ENCODE measurements at regions of chr17 and their contacts with region 1.

Region 1: GRCh38 chr17:75515496-75516254 is at the start of gene CASKIN2:
- DNase-seq: peak; percentile 97 to 99
- H3K4me3 ChIP-seq: peak within 1 kb of the TSS; percentile 93
- H3K4me3 Mint-ChIP-seq: peak within 1 kb of the TSS; percentile 94
- H3K27ac Mint-ChIP-seq: no peak within 1 kb of the TSS
- H3K4me1 ChIP-seq: peaks cover 15% of the 10 kb centered on the region; the same call in 1 of the 2 replicates
- H3K4me1 Mint-ChIP-seq: peaks cover 12% of the 10 kb centered on the region
- H3K27me3 ChIP-seq: no peaks in the 10 kb centered on the region
- H3K27me3 Mint-ChIP-seq: no peaks in the 10 kb centered on the region
- CTCF ChIP-seq: peak; percentile 99
- total RNA-seq, gene CASKIN2: 41.8 and 48.9 TPM in 2 replicates

Region 2: DNA sequence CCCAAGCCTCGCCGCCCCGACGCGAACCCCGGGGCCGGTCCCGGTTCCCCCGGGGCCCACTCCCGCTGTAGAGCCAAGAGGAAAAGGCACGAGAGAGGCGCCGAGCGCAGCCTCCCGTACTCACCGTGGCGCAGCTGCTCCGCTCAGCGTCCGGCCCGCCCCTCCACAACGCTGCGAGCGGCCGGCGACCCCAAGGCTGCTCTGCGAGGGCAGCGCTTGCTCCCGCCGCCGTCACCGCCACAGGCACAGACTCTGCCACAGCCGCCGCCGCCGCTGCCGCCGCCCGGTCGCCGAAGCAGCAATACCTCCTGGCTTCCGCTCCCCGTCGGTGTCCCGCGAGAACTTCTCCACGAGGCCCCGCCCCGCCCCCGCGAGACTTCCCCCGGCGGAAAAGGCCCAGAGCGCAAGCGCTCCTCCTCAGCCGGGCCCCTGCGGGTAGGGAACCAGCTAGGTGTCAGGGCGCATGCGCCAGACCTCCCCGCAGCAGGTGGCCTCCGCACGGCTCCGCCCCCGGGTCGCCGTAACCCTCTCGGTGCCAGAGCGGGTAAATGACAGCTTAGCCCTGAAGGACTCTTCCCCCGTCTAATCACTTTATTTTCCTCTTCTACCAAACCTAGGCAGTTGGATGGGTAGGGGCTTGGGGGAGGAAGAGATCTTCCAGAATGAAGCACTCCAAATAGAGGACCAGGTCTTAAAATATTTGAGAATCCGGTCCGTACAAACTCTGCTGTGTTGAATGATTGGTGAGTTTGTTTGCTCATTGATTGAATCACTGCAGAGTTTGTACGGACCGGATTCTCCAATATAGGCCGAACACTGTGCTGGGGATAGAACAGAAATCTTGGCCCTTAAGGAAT is 110.1 kb before region 1 on chr17 and contains the start of gene GRB2:
- CTCF ChIA-PET with region 1: interaction called, 10 read pairs
- POLR2A ChIA-PET with region 1: interaction called, 3 read pairs
- intact Hi-C with region 1: no loop called
- DNase-seq: peak; percentile 99 to 100
- H3K4me3 ChIP-seq: peak within 1 kb of the TSS; percentile 70
- H3K4me3 Mint-ChIP-seq: peak within 1 kb of the TSS; percentile 78
- H3K27ac Mint-ChIP-seq: peak within 1 kb of the TSS; percentile 71
- H3K4me1 ChIP-seq: 0 out of 2 replicates have a peak, but pooled peaks cover 6% of the 10 kb centered on the region
- H3K4me1 Mint-ChIP-seq: peaks cover 12% of the 10 kb centered on the region
- H3K27me3 ChIP-seq: no peaks in the 10 kb centered on the region
- H3K27me3 Mint-ChIP-seq: no peaks in the 10 kb centered on the region
- CTCF ChIP-seq: no peak
- total RNA-seq, gene GRB2: 113 and 115 TPM in 2 replicates

Region 3: GRCh38 chr17:75549221-75550138 is 33.8 kb after region 1 on chr17:
- CTCF ChIA-PET with region 1: interaction called, 10 read pairs
- POLR2A ChIA-PET with region 1: interaction called, 4 read pairs
- intact Hi-C with region 1: loop called (anchors 5 kb)
- DNase-seq: peak; percentile 69 to 78
- H3K4me3 ChIP-seq: no peak overlapping the region
- H3K4me3 Mint-ChIP-seq: no peak overlapping the region
- H3K27ac Mint-ChIP-seq: peak overlapping the region; percentile 68
- H3K4me1 ChIP-seq: peaks cover 48% of the 10 kb centered on the region
- H3K4me1 Mint-ChIP-seq: peaks cover 22% of the 10 kb centered on the region
- H3K27me3 ChIP-seq: no peaks in the 10 kb centered on the region
- H3K27me3 Mint-ChIP-seq: no peaks in the 10 kb centered on the region
- CTCF ChIP-seq: no peak

Region 4: DNA sequence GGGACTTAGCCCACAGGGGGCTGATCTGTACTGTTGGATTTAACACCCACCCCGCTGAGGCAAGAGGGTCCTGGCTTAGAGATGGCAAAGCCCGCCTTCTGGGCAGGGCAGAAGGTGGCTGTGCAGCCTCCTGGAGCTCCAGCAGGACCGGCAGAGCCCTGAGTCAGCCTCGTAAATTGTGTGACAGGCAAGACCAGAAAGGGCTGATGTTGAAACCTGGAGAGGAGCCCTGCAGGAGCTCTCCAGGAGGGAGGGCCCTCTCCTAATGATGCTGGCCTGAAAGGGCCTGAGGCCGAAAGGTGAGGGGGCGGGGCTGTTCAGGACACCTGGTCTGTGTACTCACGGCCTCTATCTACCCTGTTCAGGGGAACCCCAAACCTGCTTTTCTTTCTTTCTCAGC is 49.4 kb after region 1 on chr17:
- CTCF ChIA-PET with region 1: interaction called, 17 read pairs
- POLR2A ChIA-PET with region 1: no interaction called
- intact Hi-C with region 1: no loop called
- DNase-seq: peak; percentile 79
- H3K4me3 ChIP-seq: no peak overlapping the region
- H3K4me3 Mint-ChIP-seq: no peak overlapping the region
- H3K27ac Mint-ChIP-seq: peak overlapping the region; percentile 58
- H3K4me1 ChIP-seq: peaks cover 8% of the 10 kb centered on the region; the same call in 1 of the 2 replicates
- H3K4me1 Mint-ChIP-seq: no peaks in the 10 kb centered on the region
- H3K27me3 ChIP-seq: no peaks in the 10 kb centered on the region
- H3K27me3 Mint-ChIP-seq: no peaks in the 10 kb centered on the region
- CTCF ChIP-seq: no peak

Region 5: DNA sequence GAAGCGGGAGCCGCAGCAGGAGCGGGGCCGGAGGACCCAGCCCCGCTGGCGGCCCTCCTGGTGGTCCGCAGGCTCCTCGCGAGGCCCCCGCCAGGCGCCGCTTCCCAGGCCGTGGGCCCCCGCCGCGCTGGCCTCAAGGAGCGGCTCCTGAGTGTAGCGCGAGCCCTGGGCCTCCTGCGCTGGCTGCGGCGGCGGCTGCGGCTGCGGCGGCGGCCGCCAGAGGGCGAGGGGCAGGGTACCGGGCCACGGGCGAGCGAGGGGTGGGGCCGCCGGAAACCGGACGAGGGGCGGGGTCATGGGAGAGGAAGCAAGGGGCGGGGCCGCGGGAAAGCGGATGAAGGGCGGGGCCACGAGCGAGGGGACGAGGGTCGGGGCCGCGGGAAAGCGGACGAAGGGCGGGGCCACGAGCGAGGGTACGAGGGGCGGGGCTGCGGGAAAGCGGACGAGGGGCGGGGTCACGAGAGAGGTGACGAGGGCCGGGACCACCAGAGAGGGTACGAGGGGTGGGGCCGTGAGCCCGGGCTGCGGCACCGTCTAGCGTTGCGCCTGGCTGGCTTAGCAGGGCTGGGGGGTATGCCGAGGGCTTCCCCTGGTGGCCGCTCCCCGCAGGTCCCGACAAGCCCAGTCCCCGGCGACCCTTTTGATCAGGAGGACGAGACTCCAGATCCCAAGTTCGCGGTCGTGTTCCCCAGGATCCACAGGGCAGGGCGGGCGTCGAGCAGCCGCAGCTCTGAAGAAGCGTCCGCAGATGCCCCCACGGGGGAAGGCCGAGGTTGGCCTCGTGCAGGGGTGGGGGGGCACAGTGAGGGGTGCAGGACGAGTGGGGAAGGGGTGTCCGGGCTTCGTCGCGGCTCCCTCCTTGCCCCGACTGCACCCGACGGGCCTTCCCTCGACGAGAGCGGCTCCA is 73.6 kb after region 1 on chr17:
- CTCF ChIA-PET with region 1: interaction called, 4 read pairs
- POLR2A ChIA-PET with region 1: no interaction called
- intact Hi-C with region 1: loop called (anchors 2 kb)
- DNase-seq: peak; percentile 95 to 97
- H3K4me3 ChIP-seq: peak overlapping the region; percentile 68
- H3K4me3 Mint-ChIP-seq: peak overlapping the region; percentile 69
- H3K27ac Mint-ChIP-seq: no peak overlapping the region
- H3K4me1 ChIP-seq: peaks cover 14% of the 10 kb centered on the region
- H3K4me1 Mint-ChIP-seq: no peaks in the 10 kb centered on the region
- H3K27me3 ChIP-seq: no peaks in the 10 kb centered on the region
- H3K27me3 Mint-ChIP-seq: no peaks in the 10 kb centered on the region
- CTCF ChIP-seq: peak; percentile 60 to 70